Activated CD8-positive, alpha-beta memory T cell treated with anti-CD3 and anti-CD28 coated beads, Interleukin-2, amount 10 ng/mL, durations not matched to agents 7 days and 5 days (primary cell): ENCODE measurements at regions of chr9 and their contacts with region 1.

Region 1: GRCh38 chr9:99012942-99013512 is 69.3 kb downstream of the COL15A1 start:
- DNase-seq: no peak
- ATAC-seq: peak; percentile 46
- H3K4me3 Mint-ChIP-seq: peak overlapping the region; percentile 58
- H3K27ac Mint-ChIP-seq: peak overlapping the region; percentile 98
- H3K4me1 Mint-ChIP-seq: peaks cover 21% of the 10 kb centered on the region
- H3K27me3 Mint-ChIP-seq: no peaks in the 10 kb centered on the region

Region 2: GRCh38 chr9:99039505-99040182 is 26.6 kb after region 1 on chr9:
- CTCF ChIA-PET with region 1: interaction called, 15 read pairs
- DNase-seq: no peak
- ATAC-seq: no peak
- H3K4me3 Mint-ChIP-seq: no peak overlapping the region
- H3K27ac Mint-ChIP-seq: peak overlapping the region; percentile 55
- H3K4me1 Mint-ChIP-seq: peaks cover 60% of the 10 kb centered on the region
- H3K27me3 Mint-ChIP-seq: no peaks in the 10 kb centered on the region